K562 (cell line): ENCODE measurements at regions of chr5 and their contacts with region 1.

Region 1: DNA sequence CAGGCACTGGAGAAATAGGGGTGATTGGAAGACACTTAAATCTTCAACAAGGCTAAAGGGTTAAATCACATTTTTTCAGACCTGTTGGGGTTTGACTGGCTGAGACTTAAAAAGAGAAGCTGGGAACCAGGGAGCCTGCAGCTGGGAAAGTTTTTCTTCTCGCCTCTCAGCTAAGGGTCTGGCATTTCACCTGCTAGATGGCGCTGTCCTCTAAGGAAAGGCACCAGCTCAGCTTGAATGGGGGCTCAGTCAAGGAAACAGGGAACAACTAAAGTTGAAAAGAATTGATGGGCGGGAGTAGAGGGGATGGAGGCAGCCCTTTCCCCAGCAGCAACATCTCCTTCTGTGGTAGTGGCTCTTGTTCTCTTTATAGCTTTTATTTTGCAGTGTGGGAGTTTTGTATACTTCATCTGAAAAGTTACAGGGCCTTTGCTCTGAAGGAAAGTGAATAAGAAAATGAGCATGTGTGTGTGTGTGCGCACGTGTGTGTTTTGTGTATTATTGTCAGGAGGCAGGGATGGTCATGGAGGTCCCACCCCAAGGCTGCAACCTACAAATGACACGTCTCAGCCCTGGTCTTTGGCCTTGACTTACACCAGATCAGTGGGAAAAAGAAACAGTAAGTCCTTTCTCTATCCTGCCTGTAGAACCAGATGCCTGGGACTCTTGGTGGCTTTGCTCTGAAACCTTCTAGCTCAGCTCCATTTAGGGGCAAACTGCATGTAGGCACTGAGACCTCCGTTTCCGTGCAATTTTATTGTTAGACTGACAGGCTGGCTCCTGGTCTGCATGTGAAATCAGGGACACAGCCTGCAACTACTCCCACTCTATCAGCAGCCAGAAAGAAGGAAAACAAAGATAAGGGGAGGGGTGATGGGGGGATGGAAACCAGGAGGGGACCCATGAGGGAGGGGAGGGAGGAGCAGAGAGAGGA is 316.2 kb upstream of the CLINT1 start:
- DNase-seq: peak; percentile 54 to 63 (median 58)
- ATAC-seq: peak; percentile 98
- H3K4me3 ChIP-seq: no peak overlapping the region
- H3K27ac ChIP-seq: no peak overlapping the region
- H3K4me1 ChIP-seq: no peaks in the 10 kb centered on the region
- H3K27me3 ChIP-seq: no peaks in the 10 kb centered on the region
- CTCF ChIP-seq: peak; percentile 69 to 81 (median 72)
- EP300 ChIP-seq: no peak
- POLR2A ChIP-seq: no peak
- RAD21 ChIP-seq: peak; percentile 75 to 82

Region 2: GRCh38 chr5:158300256-158300655 is 125.1 kb after region 1 on chr5:
- CTCF ChIA-PET with region 1: no interaction called
- POLR2A ChIA-PET with region 1: no interaction called
- in situ Hi-C with region 1: no loop called
- intact Hi-C with region 1: no loop called
- DNase-seq: no peak
- ATAC-seq: no peak
- H3K4me3 ChIP-seq: no peak overlapping the region
- H3K27ac ChIP-seq: no peak overlapping the region
- H3K4me1 ChIP-seq: no peaks in the 10 kb centered on the region
- H3K27me3 ChIP-seq: no peaks in the 10 kb centered on the region
- CTCF ChIP-seq: no peak
- EP300 ChIP-seq: no peak
- POLR2A ChIP-seq: no peak
- RAD21 ChIP-seq: no peak

Region 3: GRCh38 chr5:158695595-158696330 is 520.6 kb after region 1 on chr5:
- CTCF ChIA-PET with region 1: no interaction called
- POLR2A ChIA-PET with region 1: no interaction called
- in situ Hi-C with region 1: no loop called
- intact Hi-C with region 1: loop called (anchors 1 kb)
- DNase-seq: peak; percentile 70 to 77 (median 74)
- ATAC-seq: peak; percentile 93
- H3K4me3 ChIP-seq: no peak overlapping the region
- H3K27ac ChIP-seq: no peak overlapping the region
- H3K4me1 ChIP-seq: no peaks in the 10 kb centered on the region
- H3K27me3 ChIP-seq: no peaks in the 10 kb centered on the region; a peak in 1 of 5 replicates
- CTCF ChIP-seq: peak; percentile 80 to 90 (median 85)
- EP300 ChIP-seq: no peak
- POLR2A ChIP-seq: no peak
- RAD21 ChIP-seq: peak; percentile 88 to 89

Region 4: GRCh38 chr5:158770506-158770905 is 595.3 kb after region 1 on chr5:
- CTCF ChIA-PET with region 1: no interaction called
- POLR2A ChIA-PET with region 1: no interaction called
- in situ Hi-C with region 1: no loop called
- intact Hi-C with region 1: loop called (anchors 10 kb)
- DNase-seq: peak; percentile 13 to 24 (median 19)
- ATAC-seq: peak; percentile 79
- H3K4me3 ChIP-seq: no peak overlapping the region
- H3K27ac ChIP-seq: no peak overlapping the region
- H3K4me1 ChIP-seq: no peaks in the 10 kb centered on the region
- H3K27me3 ChIP-seq: no peaks in the 10 kb centered on the region
- CTCF ChIP-seq: peak; percentile 41 to 47 (median 41); a peak in 3 of 6 replicates
- EP300 ChIP-seq: no peak
- POLR2A ChIP-seq: no peak
- RAD21 ChIP-seq: peak in 1 of 2 experiments; percentile 32; a peak in 3 of 4 replicates

Region 5: DNA sequence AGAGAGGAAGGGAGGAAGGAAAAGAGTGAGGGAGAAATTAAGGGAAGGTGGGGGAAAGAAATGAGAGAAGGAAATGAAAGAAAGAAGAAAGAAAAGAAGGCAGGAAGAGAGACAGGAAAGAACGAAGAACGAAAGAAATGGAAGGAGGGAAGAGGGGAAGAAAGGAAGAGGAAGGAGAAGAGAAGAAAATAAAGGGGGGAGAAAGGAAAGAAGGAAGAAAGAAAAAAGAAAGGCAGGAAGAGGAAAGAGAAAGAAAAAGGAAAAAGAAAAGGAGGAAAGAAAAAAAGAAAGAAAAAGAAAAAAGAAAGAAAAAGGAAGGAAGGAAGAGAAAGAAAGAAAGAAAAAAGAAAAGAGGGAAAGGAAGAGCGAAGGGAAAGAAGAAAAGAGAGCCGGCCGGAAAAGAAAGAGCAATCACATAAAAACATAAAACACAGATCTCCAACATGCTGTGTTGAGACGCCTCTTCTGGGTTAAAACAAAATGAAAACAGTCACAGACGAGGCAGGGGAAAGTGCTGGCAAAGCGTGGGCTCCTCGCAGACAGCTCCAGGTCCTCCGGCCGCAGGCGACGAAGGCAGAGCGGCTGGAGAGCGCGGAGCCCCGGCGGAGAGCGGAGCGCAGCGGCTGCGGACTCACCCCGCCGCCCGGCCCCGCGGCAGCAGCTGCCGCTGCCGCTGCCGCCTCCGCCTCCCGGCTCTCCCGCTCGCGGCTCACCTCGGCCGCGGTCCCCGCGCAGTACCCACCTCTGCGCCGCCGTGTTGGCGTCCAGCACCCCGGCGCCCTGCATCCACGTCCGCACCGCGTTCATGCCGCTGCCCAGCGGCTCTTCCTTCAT is 923.6 kb after region 1 on chr5:
- CTCF ChIA-PET with region 1: interaction called, 3 read pairs
- POLR2A ChIA-PET with region 1: no interaction called
- in situ Hi-C with region 1: loop called (anchors 10 kb)
- intact Hi-C with region 1: loop called (anchors 2 kb)
- DNase-seq: peak; percentile 52 to 67 (median 58)
- ATAC-seq: peak; percentile 69
- H3K4me3 ChIP-seq: peak overlapping the region; percentile 45
- H3K27ac ChIP-seq: no peak overlapping the region
- H3K4me1 ChIP-seq: peaks cover 6 to 28% of the 10 kb centered on the region in 2 experiments; a peak in 4 of 5 replicates
- H3K27me3 ChIP-seq: no peaks in the 10 kb centered on the region
- CTCF ChIP-seq: no peak
- EP300 ChIP-seq: no peak
- POLR2A ChIP-seq: no peak
- RAD21 ChIP-seq: no peak

Region 6: GRCh38 chr5:159106569-159107282 is 931.5 kb after region 1 on chr5:
- CTCF ChIA-PET with region 1: interaction called, 4 read pairs
- POLR2A ChIA-PET with region 1: interaction called, 3 read pairs
- in situ Hi-C with region 1: loop called (anchors 10 kb)
- intact Hi-C with region 1: loop called (anchors 2 kb)
- DNase-seq: peak; percentile 73 to 79 (median 76)
- ATAC-seq: peak; percentile 96
- H3K4me3 ChIP-seq: no peak overlapping the region
- H3K27ac ChIP-seq: no peak overlapping the region
- H3K4me1 ChIP-seq: peaks cover 0 to 9% of the 10 kb centered on the region in 2 experiments; a peak in 1 of 5 replicates
- H3K27me3 ChIP-seq: peaks cover 20 to 26% of the 10 kb centered on the region in 2 experiments
- CTCF ChIP-seq: peak; percentile 82 to 88 (median 87)
- EP300 ChIP-seq: no peak
- POLR2A ChIP-seq: no peak
- RAD21 ChIP-seq: peak; percentile 86 to 91

Region 7: DNA sequence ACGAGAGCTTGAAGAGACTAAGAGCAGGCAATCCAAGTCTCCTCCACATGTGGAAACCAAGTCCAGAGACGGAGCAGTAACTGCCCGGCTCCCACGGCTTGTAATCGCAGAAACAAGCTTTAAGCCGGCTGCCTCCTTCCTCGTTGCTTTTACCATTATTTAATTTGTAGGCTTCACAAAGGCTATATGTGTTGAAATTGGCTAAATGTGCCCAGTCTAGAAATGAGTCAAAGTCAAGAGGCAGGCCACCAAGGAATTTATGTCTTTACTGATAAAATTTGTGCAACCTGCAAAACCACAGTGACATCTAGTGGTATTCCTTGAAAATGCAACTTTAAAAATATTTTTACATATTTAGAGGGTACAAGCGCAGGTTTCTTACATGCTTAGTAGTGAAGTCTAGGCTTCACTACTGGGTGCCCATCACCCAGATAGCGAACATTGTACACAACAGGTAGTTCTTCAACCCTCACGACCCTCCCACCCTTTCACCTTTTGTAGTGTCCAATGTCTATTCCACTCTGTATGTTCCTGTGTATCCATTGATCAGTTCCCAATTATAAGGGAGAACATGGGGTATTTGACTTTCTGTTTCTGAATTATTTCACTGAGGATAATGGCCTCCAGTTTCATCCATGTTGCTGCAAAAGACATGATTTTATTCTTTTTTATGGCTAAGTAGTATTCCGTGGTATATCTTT is 958.0 kb after region 1 on chr5:
- CTCF ChIA-PET with region 1: no interaction called
- POLR2A ChIA-PET with region 1: no interaction called
- in situ Hi-C with region 1: loop called (anchors 10 kb)
- intact Hi-C with region 1: loop called (anchors 1 kb)
- DNase-seq: peak; percentile 18 to 65 (median 38)
- ATAC-seq: peak; percentile 72
- H3K4me3 ChIP-seq: no peak overlapping the region
- H3K27ac ChIP-seq: no peak overlapping the region
- H3K4me1 ChIP-seq: peaks cover 0 to 3% of the 10 kb centered on the region in 2 experiments; a peak in 2 of 5 replicates
- H3K27me3 ChIP-seq: peaks cover 0 to 8% of the 10 kb centered on the region in 2 experiments; a peak in 4 of 5 replicates
- CTCF ChIP-seq: peak; percentile 59 to 94 (median 68); a peak in 5 of 6 replicates
- EP300 ChIP-seq: no peak
- POLR2A ChIP-seq: no peak
- RAD21 ChIP-seq: peak; percentile 90 to 94